ENCODE measurements at regions of chr12 and their contacts with region 1.

Region 1: GRCh38 chr12:95217377-95218149 is at the starts of genes FGD6 and VEZT:
- DNase-seq: peak; percentile 99
- ATAC-seq: peak; percentile 97
- H3K4me3 ChIP-seq: peak within 1 kb of the TSS; percentile 95 to 98
- H3K27ac ChIP-seq: peak within 1 kb of the TSS; percentile 51 to 97
- H3K4me1 ChIP-seq: peaks cover 0 to 2% of the 10 kb centered on the region in 2 donors
- H3K27me3 ChIP-seq: no peaks in the 10 kb centered on the region
- total RNA-seq, gene FGD6: 8.9 to 15.5 TPM
- total RNA-seq, gene VEZT: 81.0 to 103 TPM

Region 2: GRCh38 chr12:95072900-95073697 is 144.5 kb before region 1 on chr12 and contains the start of gene NR2C1:
- intact Hi-C with region 1: loop called in 1 of 2 experiments (anchors 2 kb)
- DNase-seq: peak; percentile 96
- ATAC-seq: peak; percentile 96
- H3K4me3 ChIP-seq: peak within 1 kb of the TSS; percentile 76 to 91
- H3K27ac ChIP-seq: peak within 1 kb of the TSS in 1 of 2 donors; percentile 77
- H3K4me1 ChIP-seq: peaks cover 2% of the 10 kb centered on the region in 2 donors
- H3K27me3 ChIP-seq: no peaks in the 10 kb centered on the region
- total RNA-seq, gene NR2C1: 24.4 to 43.8 TPM

Region 3: DNA sequence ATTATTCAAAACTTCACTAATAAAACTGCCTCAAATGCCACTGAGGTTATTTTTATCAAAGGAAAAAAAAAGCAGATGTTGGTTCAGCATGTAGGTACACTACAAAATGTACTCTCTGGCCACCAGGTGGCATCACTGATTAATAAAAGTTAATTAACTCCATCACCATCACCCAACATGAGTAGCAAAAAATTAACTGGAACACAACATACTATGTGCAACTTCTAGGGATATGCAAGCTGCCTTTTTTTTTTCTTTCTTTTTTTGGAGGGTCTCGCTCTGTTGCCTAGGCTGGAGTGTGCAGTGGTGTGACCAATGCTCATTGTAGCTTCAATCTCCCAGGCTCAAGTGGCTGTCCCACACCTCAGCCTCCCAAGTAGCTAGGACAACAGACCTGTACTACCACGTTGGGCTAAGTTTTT is 100.4 kb before region 1 on chr12:
- intact Hi-C with region 1: loop called (anchors 5 kb)
- DNase-seq: peak in 1 of 2 donors; percentile 63
- ATAC-seq: peak; percentile 84
- H3K4me3 ChIP-seq: no peak overlapping the region
- H3K27ac ChIP-seq: peak overlapping the region in 1 of 2 donors; percentile 10
- H3K4me1 ChIP-seq: peaks cover 4 to 6% of the 10 kb centered on the region in 2 donors
- H3K27me3 ChIP-seq: no peaks in the 10 kb centered on the region

Region 4: GRCh38 chr12:95130096-95130495 is 87.5 kb before region 1 on chr12:
- intact Hi-C with region 1: loop called in 1 of 2 experiments (anchors 5 kb)
- DNase-seq: no peak
- ATAC-seq: no peak
- H3K4me3 ChIP-seq: no peak overlapping the region
- H3K27ac ChIP-seq: no peak overlapping the region
- H3K4me1 ChIP-seq: peaks cover 0 to 1% of the 10 kb centered on the region in 2 donors
- H3K27me3 ChIP-seq: no peaks in the 10 kb centered on the region

Region 5: GRCh38 chr12:95173392-95174251 is 43.9 kb before region 1 on chr12:
- intact Hi-C with region 1: no loop called
- DNase-seq: peak in 1 of 2 donors; percentile 69
- ATAC-seq: peak; percentile 41
- H3K4me3 ChIP-seq: no peak overlapping the region
- H3K27ac ChIP-seq: peak overlapping the region in 1 of 2 donors; percentile 25
- H3K4me1 ChIP-seq: no peaks in the 10 kb centered on the region
- H3K27me3 ChIP-seq: no peaks in the 10 kb centered on the region

Region 6: DNA sequence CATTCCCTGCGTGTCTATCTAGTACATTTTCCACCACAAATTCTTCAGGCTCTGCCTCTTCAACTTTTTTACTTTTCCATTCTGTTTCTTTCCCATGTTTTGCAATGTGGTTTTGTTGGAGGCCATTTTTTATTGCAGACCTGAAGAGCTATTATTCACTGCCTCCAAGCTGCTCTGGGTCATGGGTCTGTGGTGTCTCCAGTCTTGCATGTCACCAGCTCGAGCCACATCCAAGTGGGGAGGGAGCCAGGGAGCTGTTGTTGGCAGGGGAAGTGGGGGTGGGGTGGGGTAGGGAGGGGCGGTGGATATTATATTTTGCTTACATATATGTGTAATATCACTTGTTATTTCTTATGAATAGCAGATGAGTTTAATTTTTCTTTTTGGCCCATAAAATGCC is 69.2 kb after region 1 on chr12:
- intact Hi-C with region 1: no loop called
- DNase-seq: no peak
- ATAC-seq: no peak
- H3K4me3 ChIP-seq: no peak overlapping the region
- H3K27ac ChIP-seq: no peak overlapping the region
- H3K4me1 ChIP-seq: no peaks in the 10 kb centered on the region
- H3K27me3 ChIP-seq: no peaks in the 10 kb centered on the region